ENCODE measurements at regions of chr4 and their contacts with region 1.

Region 1: GRCh38 chr4:155376387-155377268 is at the start of gene MAP9:
- DNase-seq: peak; percentile 89
- ATAC-seq: peak; percentile 99
- total RNA-seq, gene MAP9: 9.9 TPM

Region 2: DNA sequence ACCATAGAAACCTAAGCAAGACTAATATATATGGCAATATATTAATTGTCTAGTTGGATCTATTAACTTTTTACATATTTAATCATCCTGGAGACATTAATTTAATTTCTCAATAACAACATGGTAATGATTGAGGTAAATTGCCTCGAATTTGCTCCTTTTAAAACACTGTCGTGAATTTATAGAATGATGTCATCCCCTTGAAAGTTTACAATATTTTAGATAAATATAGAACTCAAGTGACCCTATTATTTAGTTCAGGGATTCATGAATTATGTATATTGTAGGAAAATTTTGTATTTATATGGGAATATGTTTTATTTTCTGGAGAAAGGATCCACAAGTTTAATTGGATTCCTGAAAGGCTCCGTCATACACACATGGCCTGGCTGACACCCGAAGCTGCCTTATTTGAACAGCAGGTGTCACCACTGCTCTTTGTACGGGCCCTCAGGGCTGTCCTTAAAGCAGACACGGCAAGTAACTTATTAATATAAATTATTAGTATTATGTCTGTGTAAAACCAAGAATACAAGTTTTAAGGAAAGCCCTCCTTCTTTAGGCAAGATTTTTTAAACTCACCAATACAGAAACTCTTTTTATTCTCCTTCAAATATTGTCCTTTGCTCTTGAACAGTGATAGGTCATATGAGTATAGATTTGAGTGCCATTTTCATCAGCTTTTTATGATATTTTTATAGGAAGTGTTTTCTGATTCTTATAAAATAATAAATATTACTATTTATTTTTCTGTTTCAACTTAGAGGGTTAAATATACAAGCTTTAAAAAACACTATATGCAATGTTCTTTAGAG is 824.5 kb before region 1 on chr4:
- intact Hi-C with region 1: loop called (anchors 10 kb)
- DNase-seq: peak; percentile 76
- ATAC-seq: peak; percentile 70

Region 3: GRCh38 chr4:155234206-155234605 is 142.4 kb before region 1 on chr4:
- intact Hi-C with region 1: no loop called
- DNase-seq: no peak
- ATAC-seq: no peak

Region 4: DNA sequence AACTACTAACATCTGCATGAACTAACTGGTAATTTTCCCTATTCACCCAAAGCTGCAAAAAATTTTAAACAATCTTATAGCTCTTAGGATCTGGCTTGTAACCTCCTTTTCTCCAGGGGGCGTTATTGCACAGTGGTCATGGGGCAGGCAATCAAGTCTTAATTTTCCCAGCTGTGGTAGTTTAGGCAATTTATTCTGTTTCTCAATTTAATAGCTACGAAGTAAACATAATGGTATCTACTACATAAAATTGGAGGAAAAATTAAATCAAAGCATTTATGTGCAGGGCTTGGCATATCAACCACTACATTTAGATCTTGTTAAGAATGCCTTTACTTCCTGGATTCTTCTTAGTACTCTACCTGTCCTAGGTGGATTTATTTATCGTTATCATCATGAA is 152.6 kb after region 1 on chr4:
- intact Hi-C with region 1: no loop called
- DNase-seq: no peak
- ATAC-seq: no peak